HepG2 (cell line): ENCODE measurements at regions of chr2 and their contacts with region 1.

Region 1: GRCh38 chr2:209556354-209556961 is 132.6 kb downstream of the MAP2 start:
- DNase-seq: peak; percentile 32
- ATAC-seq: peak; percentile 84
- H3K4me3 ChIP-seq: no peak overlapping the region
- H3K27ac ChIP-seq: no peak overlapping the region
- H3K4me1 ChIP-seq: no peaks in the 10 kb centered on the region
- H3K27me3 ChIP-seq: no peaks in the 10 kb centered on the region
- CTCF ChIP-seq: peak; percentile 45
- EP300 ChIP-seq: no peak
- POLR2A ChIP-seq: no peak
- RAD21 ChIP-seq: no peak

Region 2: GRCh38 chr2:208274748-208275147 is 1281.7 kb before region 1 on chr2:
- CTCF ChIA-PET with region 1: no interaction called
- POLR2A ChIA-PET with region 1: no interaction called
- in situ Hi-C with region 1: no loop called
- intact Hi-C with region 1: no loop called
- DNase-seq: no peak
- ATAC-seq: no peak
- H3K4me3 ChIP-seq: no peak overlapping the region
- H3K27ac ChIP-seq: no peak overlapping the region
- H3K4me1 ChIP-seq: no peaks in the 10 kb centered on the region
- H3K27me3 ChIP-seq: no peaks in the 10 kb centered on the region
- CTCF ChIP-seq: no peak
- EP300 ChIP-seq: no peak
- POLR2A ChIP-seq: no peak
- RAD21 ChIP-seq: no peak

Region 3: GRCh38 chr2:209463226-209463625 is 93.2 kb before region 1 on chr2:
- CTCF ChIA-PET with region 1: no interaction called
- POLR2A ChIA-PET with region 1: no interaction called
- in situ Hi-C with region 1: no loop called
- intact Hi-C with region 1: loop called (anchors 2 kb)
- DNase-seq: no peak
- ATAC-seq: 0 out of 3 replicates have a peak, but pooled peaks have one; percentile 41
- H3K4me3 ChIP-seq: no peak overlapping the region
- H3K27ac ChIP-seq: no peak overlapping the region
- H3K4me1 ChIP-seq: no peaks in the 10 kb centered on the region
- H3K27me3 ChIP-seq: no peaks in the 10 kb centered on the region
- CTCF ChIP-seq: no peak
- EP300 ChIP-seq: no peak
- POLR2A ChIP-seq: no peak
- RAD21 ChIP-seq: no peak

Region 4: DNA sequence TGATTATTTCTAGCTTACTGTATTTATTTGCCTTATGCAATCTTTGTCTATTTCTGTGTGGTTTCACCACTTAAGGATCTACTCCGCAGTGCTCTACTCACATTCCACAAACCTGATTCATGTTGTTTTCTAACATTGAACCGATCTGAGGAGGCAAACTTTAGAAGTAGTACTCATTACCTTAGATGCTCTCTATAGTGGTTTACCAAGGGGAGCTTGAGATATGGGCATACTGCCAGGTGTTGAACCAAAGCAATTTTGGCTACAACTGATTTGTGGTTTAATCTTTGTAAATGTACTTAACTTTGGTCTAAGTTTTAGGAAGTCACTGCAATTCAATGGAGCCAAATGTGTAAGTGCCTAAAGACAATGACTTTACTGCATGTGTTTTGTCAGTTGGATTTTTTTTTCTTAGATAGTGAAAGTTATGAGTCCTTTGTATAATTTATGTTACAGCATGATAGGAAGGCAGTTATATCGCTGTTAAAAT is 82.5 kb before region 1 on chr2:
- CTCF ChIA-PET with region 1: no interaction called
- POLR2A ChIA-PET with region 1: no interaction called
- in situ Hi-C with region 1: no loop called
- intact Hi-C with region 1: no loop called
- DNase-seq: peak; percentile 24
- ATAC-seq: no peak
- H3K4me3 ChIP-seq: no peak overlapping the region
- H3K27ac ChIP-seq: no peak overlapping the region
- H3K4me1 ChIP-seq: no peaks in the 10 kb centered on the region
- H3K27me3 ChIP-seq: no peaks in the 10 kb centered on the region
- CTCF ChIP-seq: no peak
- EP300 ChIP-seq: no peak
- POLR2A ChIP-seq: no peak
- RAD21 ChIP-seq: no peak

Region 5: DNA sequence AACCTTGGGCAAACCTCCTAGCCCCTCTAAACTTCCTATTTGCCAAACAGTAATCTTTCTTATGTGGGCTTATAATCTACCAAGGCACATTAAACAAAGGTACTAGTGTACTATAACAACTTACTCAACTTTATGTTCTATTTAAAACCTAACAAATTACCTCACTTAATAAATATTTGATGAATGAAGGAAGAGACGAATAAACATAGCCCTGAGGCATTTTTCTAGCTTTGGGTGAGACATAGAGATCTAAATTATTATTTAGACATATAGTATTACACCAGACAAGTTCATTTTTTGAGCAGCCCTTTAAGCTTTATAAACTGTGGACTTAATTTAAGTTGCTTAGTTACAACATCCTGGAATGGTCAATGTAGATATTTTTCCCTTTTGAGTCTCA is 319.8 kb after region 1 on chr2:
- CTCF ChIA-PET with region 1: no interaction called
- POLR2A ChIA-PET with region 1: no interaction called
- in situ Hi-C with region 1: no loop called
- intact Hi-C with region 1: loop called (anchors 5 kb)
- DNase-seq: no peak
- ATAC-seq: no peak
- H3K4me3 ChIP-seq: no peak overlapping the region
- H3K27ac ChIP-seq: no peak overlapping the region
- H3K4me1 ChIP-seq: no peaks in the 10 kb centered on the region
- H3K27me3 ChIP-seq: no peaks in the 10 kb centered on the region
- CTCF ChIP-seq: no peak
- EP300 ChIP-seq: no peak
- POLR2A ChIP-seq: no peak
- RAD21 ChIP-seq: no peak